Activated naive CD4-positive, alpha-beta T cell treated with anti-CD3 and anti-CD28 coated beads for 36 hours (primary cell): ENCODE measurements at regions of chr2 and their contacts with region 1.

Region 1: GRCh38 chr2:54723131-54723995 is at the start of gene EML6:
- DNase-seq: peak; percentile 99
- H3K4me3 Mint-ChIP-seq: peak within 1 kb of the TSS; percentile 90
- H3K27ac Mint-ChIP-seq: no peak within 1 kb of the TSS
- H3K4me1 Mint-ChIP-seq: peaks cover 13% of the 10 kb centered on the region
- H3K27me3 Mint-ChIP-seq: peaks cover 32% of the 10 kb centered on the region
- total RNA-seq, gene EML6: 0.38 to 0.49 TPM

Region 2: GRCh38 chr2:53970724-53971602 is 752.4 kb before region 1 on chr2 and contains the start of gene PSME4:
- CTCF ChIA-PET with region 1: no interaction called
- intact Hi-C with region 1: loop called (anchors 1 kb)
- DNase-seq: peak; percentile 95
- H3K4me3 Mint-ChIP-seq: peak within 1 kb of the TSS; percentile 83
- H3K27ac Mint-ChIP-seq: peak within 1 kb of the TSS; percentile 86
- H3K4me1 Mint-ChIP-seq: peaks cover 38% of the 10 kb centered on the region
- H3K27me3 Mint-ChIP-seq: no peaks in the 10 kb centered on the region
- total RNA-seq, gene PSME4: 31.5 to 38.8 TPM

Region 3: DNA sequence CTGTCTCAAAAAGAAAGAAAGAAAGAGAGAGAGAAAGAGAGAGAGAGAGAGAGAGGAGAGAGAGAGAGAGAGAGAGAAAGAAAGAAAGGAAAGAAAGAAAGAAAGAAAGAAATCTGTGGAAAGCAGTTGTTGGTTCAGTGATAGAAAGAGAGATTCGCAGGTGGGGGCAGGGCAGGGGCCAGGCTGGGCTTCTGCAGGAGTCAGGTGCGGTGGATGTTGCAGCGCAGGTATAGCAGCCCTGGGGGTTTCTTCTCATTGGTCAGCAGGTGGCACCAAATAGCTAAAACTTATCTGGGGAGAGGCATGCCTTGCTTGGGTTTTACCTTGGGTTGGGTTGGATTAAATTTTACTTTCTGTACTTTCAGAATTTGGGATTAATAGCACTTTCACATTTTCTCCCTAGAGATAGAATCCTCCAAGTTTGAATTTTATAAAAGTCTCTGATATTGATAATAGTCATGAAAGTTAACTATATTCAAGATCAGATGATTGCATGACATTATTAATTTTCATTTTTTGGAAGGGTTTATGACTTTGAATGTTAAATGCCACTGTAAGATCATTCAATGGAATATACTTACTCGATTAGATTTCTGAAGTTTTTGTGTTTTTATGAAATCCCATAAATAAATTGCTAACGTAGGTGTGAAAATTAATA is 200.6 kb before region 1 on chr2:
- CTCF ChIA-PET with region 1: no interaction called
- intact Hi-C with region 1: loop called (anchors 1 kb)
- DNase-seq: peak; percentile 73
- H3K4me3 Mint-ChIP-seq: no peak overlapping the region
- H3K27ac Mint-ChIP-seq: no peak overlapping the region
- H3K4me1 Mint-ChIP-seq: peaks cover 15% of the 10 kb centered on the region
- H3K27me3 Mint-ChIP-seq: no peaks in the 10 kb centered on the region

Region 4: DNA sequence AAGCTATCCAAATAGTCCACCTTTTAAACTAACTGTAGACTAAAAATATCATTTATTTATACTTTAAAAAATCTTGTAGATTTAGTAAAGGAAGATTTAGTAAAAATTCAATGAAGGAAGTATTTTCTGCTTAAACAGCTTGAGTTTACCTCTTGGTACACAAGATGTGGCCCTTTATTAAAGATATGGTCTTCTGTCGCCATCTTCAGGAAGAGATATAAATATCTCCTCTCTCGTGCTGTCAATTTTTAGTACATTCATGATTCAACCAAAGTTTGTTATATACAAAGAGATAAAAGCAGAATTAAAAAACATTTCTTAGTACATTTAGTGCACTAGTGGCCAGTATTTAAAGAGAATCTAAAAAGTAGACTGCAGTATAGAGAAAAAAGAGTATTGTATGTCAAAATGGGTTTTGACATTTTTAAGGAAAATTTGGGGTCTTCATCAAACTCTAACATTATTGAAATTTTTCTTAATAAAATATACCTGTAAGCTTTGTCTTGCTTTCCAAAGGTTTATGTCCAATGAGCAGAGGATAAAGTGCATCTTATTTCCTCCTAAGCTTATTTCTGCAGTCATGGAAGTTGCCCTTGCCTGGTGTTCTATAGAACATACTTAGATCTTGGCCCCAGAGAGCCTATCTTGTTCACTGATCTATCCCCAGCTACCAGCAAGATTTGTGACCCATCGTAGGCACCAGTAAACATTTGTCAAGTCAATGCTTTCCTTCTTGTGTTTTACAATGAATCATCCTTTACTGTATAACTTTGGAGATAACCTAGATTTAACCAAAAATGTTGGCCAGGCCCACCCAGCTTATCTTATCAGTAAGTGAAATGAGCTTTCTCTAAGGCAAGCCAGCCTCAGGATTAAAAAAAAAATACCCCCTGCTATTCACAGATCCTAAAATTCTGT is 18.4 kb before region 1 on chr2:
- CTCF ChIA-PET with region 1: interaction called, 5 read pairs
- intact Hi-C with region 1: loop called (anchors 1 kb)
- DNase-seq: no peak
- H3K4me3 Mint-ChIP-seq: no peak overlapping the region
- H3K27ac Mint-ChIP-seq: no peak overlapping the region
- H3K4me1 Mint-ChIP-seq: peaks cover 12% of the 10 kb centered on the region
- H3K27me3 Mint-ChIP-seq: peaks cover 14% of the 10 kb centered on the region

Region 5: DNA sequence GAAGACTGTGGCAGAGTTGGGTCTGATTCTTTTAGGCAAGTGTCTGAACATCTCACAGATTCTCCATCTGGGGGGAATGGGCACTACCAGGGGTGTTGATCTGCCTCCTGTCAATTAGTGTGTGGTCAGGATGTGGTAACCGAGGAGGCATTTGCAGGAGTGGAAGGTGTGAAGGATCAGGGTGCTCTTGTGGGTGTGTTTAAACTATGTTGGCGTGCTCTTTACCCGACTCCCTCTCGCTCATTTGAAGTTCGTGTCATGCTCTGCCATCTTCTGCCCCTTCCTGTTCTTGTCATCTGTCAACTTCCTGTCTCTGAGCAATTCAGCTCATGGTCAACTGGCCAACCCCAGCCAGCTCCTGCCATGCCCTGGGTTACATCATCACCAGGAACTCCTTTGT is 219.0 kb after region 1 on chr2:
- CTCF ChIA-PET with region 1: no interaction called
- intact Hi-C with region 1: loop called (anchors 1 kb)
- DNase-seq: peak; percentile 45
- H3K4me3 Mint-ChIP-seq: no peak overlapping the region
- H3K27ac Mint-ChIP-seq: no peak overlapping the region
- H3K4me1 Mint-ChIP-seq: peaks cover 4% of the 10 kb centered on the region
- H3K27me3 Mint-ChIP-seq: no peaks in the 10 kb centered on the region

Region 6: DNA sequence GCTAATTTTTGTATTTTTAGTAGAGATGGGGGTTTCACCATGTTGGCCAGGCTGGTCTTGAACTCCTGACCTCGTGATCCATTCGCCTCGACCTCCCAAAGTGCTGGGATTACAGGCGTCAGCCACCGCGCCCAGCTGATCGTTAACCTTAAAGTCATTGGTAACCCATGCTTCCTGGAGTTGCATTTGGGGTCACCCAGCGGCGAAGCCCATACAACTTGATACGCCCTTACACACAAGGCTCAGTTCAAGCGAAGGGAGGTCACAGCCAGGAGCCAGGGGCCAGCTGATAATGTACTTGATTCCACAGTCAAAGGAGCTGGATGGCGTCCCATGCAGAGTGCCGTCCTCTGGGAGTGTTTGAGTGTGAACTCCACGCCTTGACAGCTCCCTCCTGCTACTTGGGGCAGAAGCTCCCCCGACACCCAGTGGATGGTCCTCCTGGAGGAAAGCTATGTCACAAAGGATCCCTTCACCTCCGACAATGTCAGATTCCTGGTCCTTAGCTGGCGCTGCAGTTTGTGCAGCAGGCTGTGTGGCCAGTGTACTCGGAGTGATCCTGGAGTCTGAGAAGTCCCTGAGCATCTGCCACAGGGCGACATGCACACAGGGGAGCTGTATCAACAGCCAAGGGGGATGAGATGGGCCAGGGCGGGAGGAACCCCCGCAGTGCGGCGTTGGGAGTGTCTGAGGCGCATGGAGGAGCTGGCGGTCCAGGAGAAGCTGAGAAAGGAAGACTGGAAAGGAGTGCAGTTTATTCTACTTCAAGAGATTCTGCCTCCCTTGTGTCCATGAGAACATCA is 500.8 kb after region 1 on chr2:
- CTCF ChIA-PET with region 1: no interaction called
- intact Hi-C with region 1: loop called (anchors 1 kb)
- DNase-seq: no peak
- H3K4me3 Mint-ChIP-seq: peak overlapping the region; percentile 71
- H3K27ac Mint-ChIP-seq: peak overlapping the region; percentile 68
- H3K4me1 Mint-ChIP-seq: peaks cover 36% of the 10 kb centered on the region
- H3K27me3 Mint-ChIP-seq: no peaks in the 10 kb centered on the region